ENCODE measurements at regions of chr16 and their contacts with region 1.

Region 1: DNA sequence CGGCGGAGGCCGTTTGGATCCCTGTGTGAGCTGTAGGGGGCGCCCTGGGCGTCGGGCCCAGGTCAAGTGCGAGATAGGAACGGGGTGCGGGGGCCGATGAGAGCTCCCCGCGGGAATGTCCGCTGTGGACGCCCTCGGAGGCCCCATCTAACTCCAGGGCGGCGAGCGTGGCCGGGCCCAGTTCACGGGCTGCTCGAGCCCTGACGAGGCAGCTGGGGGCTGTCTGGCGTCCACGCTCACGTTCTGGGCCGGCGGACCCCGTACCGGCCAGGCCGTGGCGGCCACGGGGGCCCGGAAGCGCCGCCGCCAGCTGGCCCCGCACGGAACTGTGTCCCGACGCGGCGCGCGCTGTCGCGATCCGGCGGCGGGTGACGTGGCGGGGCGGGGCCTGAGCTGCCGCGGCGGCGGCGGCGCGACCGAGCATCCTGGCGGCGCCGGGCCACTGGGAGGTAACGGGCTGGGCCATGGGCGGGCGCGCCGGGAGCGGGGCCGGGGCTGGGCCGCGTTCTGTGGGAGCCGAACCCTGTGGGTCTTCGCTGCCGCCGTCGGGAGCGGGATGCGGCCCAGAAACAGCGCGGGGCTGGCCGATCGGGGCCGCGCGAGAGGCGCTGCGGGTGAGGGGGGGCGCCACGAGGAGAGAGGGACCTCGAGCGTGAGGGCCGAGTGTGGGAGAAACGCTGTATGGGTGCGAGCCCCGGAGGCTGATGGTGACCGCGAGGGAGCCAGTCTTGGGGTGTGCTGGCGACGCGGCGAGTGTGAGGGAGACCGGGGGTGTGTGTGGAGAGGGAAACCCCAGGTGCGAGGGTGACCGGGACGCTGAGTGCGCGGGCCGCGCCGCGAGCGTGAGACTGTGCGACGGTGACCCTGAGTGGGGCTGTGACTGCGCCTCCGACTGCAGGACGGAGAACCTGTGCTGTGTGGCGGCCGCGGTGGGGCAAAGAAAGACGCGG is at the start of gene SLC7A6:
- DNase-seq: peak; percentile 93

Region 2: DNA sequence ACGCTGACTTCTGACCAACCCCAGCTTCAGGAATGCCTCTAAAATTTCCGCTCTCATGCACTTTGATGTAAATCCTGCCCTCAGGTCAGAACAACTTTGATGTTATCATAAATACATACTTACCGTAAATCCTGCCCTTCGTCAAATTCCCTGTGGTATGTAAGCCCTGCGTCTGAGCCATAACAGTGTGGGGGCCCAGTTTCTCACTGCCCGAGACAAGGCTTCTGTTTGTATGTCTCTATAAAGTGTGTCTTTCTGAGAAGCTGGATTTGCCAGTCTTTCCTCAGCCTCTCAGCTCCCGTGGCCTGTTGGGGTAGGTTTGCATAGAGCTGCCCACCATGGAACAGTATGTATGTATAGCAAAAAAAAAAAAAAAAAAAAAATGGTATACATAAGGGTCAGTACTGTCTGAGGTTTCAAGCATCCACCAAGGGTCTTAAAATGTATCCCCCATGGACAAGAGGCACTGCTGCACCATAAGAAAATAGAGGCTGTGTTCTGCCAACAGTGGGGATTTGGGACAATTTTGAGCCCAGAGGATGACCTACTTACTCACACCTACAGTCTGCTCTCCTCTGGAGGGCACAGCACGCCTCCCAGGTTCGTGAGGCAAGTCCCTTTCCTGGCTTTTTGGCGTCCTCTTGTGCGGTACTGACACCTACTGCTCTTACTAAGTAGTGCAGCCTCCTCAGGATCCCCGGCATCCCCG is 63.9 kb after region 1 on chr16:
- in situ Hi-C with region 1: loop called (anchors 10 kb)
- DNase-seq: peak; percentile 90